Spleen (tissue), 13 donors: ENCODE measurements at regions of chr4 and their contacts with region 1.

Region 1: GRCh38 chr4:169485791-169486742 is 126.3 kb downstream of the NEK1 start:
- DNase-seq: no peak
- H3K4me3 ChIP-seq: no peak overlapping the region
- H3K27ac ChIP-seq: no peak overlapping the region
- H3K4me1 ChIP-seq: peaks cover 0 to 8% (median 0%) of the 10 kb centered on the region in 6 donors
- H3K27me3 ChIP-seq: no peaks in the 10 kb centered on the region
- CTCF ChIP-seq: peak in 9 of 11 experiments; percentile 31 to 60 (median 44)
- POLR2A ChIP-seq: no peak

Region 2: GRCh38 chr4:168923526-168924194 is 562.4 kb before region 1 on chr4:
- intact Hi-C with region 1: loop called (anchors 5 kb)
- DNase-seq: no peak
- H3K4me3 ChIP-seq: no peak overlapping the region
- H3K27ac ChIP-seq: no peak overlapping the region
- H3K4me1 ChIP-seq: no peaks in the 10 kb centered on the region
- H3K27me3 ChIP-seq: no peaks in the 10 kb centered on the region
- CTCF ChIP-seq: peak in 10 of 11 experiments; percentile 32 to 77 (median 66)
- POLR2A ChIP-seq: no peak

Region 3: GRCh38 chr4:169024762-169025161 is 461.3 kb before region 1 on chr4:
- intact Hi-C with region 1: loop called (anchors 10 kb)
- DNase-seq: no peak
- H3K4me3 ChIP-seq: no peak overlapping the region
- H3K27ac ChIP-seq: no peak overlapping the region
- H3K4me1 ChIP-seq: no peaks in the 10 kb centered on the region
- H3K27me3 ChIP-seq: no peaks in the 10 kb centered on the region
- CTCF ChIP-seq: peak in 7 of 11 experiments; percentile 23 to 58 (median 45)
- POLR2A ChIP-seq: no peak